Activated B cell treated with CpG ODN at 0.5 μM for 24 hours (primary cell): ENCODE measurements at regions of chr10 and their contacts with region 1.

Region 1: DNA sequence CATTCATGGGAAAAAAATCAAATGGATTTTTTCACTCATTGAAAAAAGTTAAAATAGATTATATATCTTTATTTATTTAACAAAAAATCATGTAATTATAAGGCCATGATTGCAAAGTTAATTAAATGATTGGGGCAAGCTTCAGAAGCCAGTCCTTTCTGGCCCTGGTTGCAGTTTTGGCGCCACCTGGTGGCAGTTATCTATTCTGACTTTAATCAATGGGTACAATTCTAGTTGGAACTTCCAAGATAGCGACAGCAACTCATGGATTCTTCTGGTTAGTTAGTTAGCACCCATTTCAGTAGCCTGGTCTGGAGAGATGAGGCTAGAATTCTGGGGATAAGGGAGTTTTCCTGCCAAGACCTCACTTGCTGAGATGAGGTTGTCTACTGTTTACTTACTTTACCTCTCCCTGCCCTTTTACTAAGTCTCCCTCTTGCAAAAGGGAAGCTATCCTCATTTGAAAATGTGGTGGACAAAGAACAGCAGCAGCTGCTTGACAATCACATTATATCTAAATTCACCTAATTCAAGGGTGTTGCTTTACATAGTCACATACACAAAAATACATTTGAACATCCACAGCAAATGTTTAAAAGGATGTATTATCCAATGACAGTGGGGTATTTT is 42.3 kb downstream of the NOC3L start:
- DNase-seq: peak; percentile 27
- ATAC-seq: no peak
- H3K4me3 Mint-ChIP-seq: no peak overlapping the region
- H3K27ac Mint-ChIP-seq: no peak overlapping the region
- H3K4me1 Mint-ChIP-seq: no peaks in the 10 kb centered on the region
- H3K27me3 Mint-ChIP-seq: no peaks in the 10 kb centered on the region
- CTCF ChIP-seq: peak; percentile 40

Region 2: GRCh38 chr10:93916257-93917063 is 403.9 kb before region 1 on chr10:
- CTCF ChIA-PET with region 1: interaction called, 10 read pairs
- POLR2A ChIA-PET with region 1: no interaction called
- intact Hi-C with region 1: loop called (anchors 1 kb)
- DNase-seq: no peak
- ATAC-seq: no peak
- H3K4me3 Mint-ChIP-seq: no peak overlapping the region
- H3K27ac Mint-ChIP-seq: no peak overlapping the region
- H3K4me1 Mint-ChIP-seq: no peaks in the 10 kb centered on the region
- H3K27me3 Mint-ChIP-seq: no peaks in the 10 kb centered on the region
- CTCF ChIP-seq: no peak

Region 3: DNA sequence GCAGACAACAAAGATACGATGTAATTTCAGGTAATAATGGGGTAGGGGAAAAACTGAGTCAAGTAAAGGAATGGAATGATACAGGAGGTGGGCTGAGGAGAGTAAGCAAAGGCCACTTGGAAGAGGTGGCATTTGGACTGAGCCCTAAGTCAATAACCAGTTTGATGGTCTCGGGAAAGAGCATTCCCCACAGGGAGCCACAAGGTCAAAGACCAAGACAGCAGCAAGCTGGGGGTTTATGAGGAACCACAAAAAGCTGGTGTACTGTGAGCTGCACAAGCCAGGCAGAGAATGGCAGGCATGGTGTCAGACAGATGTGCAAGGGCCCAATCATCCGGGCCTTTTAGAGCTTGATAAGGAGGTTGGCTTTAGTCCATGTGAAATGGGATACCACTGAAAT is 56.3 kb before region 1 on chr10:
- CTCF ChIA-PET with region 1: no interaction called
- POLR2A ChIA-PET with region 1: no interaction called
- intact Hi-C with region 1: no loop called
- DNase-seq: no peak
- ATAC-seq: no peak
- H3K4me3 Mint-ChIP-seq: no peak overlapping the region
- H3K27ac Mint-ChIP-seq: no peak overlapping the region
- H3K4me1 Mint-ChIP-seq: no peaks in the 10 kb centered on the region
- H3K27me3 Mint-ChIP-seq: peaks cover 17% of the 10 kb centered on the region
- CTCF ChIP-seq: no peak

Region 4: DNA sequence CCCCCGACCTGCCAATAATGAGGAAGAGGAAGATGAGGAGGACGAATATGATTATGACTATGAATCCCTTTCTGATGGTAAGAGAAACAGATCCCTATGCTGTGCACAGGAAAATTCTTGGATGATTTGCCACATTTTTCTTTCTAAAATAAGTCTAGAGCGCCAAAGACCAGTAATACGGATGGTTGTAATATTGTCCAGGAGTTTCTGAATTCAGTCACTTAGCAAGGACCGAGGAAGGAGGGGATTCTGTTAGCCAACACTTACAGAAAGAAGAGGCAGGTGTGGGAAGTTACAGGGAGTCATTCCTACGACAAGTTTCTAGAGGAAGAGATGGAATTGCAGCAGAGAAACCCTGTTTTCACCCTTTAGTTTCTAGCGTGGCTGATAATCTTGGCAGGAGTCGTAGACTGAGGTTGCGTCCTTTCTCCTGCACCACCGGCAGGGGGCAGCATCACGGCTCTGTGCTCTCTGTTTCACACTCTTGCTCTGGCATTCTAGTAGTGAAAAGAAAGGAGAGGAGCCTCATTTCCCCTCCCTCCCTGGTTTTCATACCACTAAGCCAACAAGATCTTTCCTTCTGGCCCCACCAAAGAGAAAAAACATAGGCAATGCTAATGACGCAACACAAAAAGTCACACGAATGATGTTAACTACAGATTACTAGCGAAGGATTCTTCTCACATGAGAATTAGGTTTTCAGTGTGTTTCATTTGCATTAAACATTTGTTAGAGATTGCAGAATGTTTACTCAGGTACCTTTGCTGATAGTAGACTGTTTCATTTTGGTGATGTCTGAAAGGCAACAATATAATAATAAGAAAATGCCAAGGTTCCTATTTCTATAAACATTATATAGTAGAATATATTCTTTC is 40.3 kb before region 1 on chr10:
- CTCF ChIA-PET with region 1: interaction called, 3 read pairs
- POLR2A ChIA-PET with region 1: no interaction called
- intact Hi-C with region 1: loop called (anchors 2 kb)
- DNase-seq: peak; percentile 49
- ATAC-seq: peak; percentile 57
- H3K4me3 Mint-ChIP-seq: no peak overlapping the region
- H3K27ac Mint-ChIP-seq: no peak overlapping the region
- H3K4me1 Mint-ChIP-seq: peaks cover 5% of the 10 kb centered on the region
- H3K27me3 Mint-ChIP-seq: peaks cover 14% of the 10 kb centered on the region
- CTCF ChIP-seq: peak; percentile 76

Region 5: DNA sequence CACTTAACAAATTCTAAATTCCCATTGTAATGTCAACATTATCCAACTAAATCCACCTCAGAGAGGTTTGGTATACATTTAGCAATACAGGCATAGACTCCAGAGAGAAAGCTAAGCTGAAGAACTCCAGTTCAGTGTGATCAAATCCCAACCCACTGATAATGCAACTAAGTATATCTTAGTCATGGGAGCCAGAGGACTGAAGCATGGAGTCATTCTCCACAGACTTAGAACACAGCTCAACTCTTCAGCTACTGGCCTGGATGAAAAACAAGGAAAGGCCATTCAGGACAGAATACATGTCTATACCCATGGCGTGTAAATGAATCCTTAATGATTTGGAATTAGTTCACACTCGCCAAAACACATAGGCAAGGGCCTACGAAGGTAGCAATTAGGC is 14.5 kb after region 1 on chr10:
- CTCF ChIA-PET with region 1: interaction called, 10 read pairs
- POLR2A ChIA-PET with region 1: no interaction called
- intact Hi-C with region 1: no loop called
- DNase-seq: no peak
- ATAC-seq: no peak
- H3K4me3 Mint-ChIP-seq: no peak overlapping the region
- H3K27ac Mint-ChIP-seq: no peak overlapping the region
- H3K4me1 Mint-ChIP-seq: no peaks in the 10 kb centered on the region
- H3K27me3 Mint-ChIP-seq: no peaks in the 10 kb centered on the region
- CTCF ChIP-seq: no peak